CD4-positive, alpha-beta memory T cell (primary cell): ENCODE measurements at regions of chr2 and their contacts with region 1.

Region 1: DNA sequence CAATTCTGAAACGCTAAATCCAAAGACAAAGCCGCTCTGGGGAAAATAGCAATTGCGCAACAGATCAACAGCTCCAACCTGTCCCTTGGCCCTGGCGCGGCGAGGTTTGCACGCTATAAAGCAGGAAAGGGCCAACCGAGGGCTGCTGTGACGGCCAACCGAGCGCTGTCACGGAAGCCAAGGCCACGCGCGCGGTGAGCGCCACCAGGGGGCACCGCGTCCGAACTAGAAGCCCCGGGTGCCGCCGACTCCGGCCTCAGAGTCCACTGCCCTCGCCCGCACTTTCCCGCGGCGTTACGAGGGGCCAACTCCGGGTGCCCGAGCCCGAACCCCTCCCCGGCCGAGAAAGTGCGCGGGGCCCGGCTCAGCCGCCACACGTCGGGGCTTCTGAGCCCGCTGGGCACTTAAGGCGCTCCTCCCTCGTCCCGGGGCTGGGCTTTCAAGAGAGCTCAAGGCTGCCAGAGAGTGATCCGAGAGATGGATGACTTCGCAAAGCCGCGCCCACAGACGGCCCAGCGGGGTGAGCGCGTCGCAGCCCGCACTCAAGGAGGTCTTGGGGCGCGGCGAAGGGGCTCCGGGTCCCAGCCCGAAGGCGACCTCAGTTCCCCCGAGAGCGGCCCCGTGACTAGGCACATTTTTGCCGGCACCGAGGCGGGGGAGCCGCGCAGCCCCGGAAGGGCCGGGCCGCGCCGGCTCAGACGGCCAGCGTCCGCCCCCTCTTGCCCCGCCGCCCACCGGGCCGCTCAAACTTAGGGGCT is 897 bp downstream of the NFE2L2 start:
- DNase-seq: peak; percentile 93 to 97 (median 94)
- H3K4me3 ChIP-seq: peak overlapping the region; percentile 57 to 100
- H3K4me3 Mint-ChIP-seq: peak overlapping the region; percentile 93 to 98 (median 96)
- H3K27ac ChIP-seq: peak overlapping the region; percentile 100
- H3K27ac Mint-ChIP-seq: peak overlapping the region; percentile 94 to 100 (median 99)
- H3K4me1 ChIP-seq: peaks cover 59% of the 10 kb centered on the region
- H3K4me1 Mint-ChIP-seq: peaks cover 36 to 75% (median 53%) of the 10 kb centered on the region in 4 donors
- H3K27me3 ChIP-seq: no peaks in the 10 kb centered on the region
- H3K27me3 Mint-ChIP-seq: no peaks in the 10 kb centered on the region

Region 2: DNA sequence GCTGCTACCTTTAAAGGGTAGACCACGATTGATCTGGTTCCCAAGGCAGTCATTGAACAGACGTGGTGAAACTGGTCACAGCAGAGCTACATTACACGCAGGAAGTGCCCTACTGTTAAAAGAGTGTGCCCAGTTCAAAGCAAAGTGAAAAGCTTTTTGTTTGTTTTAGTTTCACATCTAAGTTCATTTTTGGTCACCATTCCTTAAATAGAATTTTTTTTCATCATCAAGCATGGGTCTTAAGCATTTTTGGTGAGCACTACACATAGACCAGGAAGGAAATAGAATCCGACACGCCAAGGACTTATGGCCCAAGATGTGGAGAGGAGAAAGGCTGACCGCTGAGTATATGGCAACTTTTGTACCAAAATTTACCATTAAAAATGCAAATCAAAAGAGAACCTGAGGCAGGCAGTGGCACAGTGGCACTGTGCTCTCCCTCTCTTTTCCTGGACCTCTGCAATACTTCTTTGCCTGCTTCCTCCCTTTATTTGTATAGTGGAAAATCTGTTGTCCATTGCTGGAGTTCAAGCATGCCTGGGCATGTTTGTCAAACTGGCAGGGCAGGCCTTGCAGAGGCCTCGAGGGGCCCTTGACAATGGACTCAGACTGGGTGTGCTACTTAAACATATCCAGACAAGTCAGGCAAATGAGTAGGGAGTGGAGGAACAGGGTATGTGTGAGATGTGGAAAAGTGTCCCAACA is 93.7 kb before region 1 on chr2:
- CTCF ChIA-PET with region 1: interaction called, 161 read pairs
- POLR2A ChIA-PET with region 1: interaction called, 159 read pairs
- intact Hi-C with region 1: no loop called
- DNase-seq: no peak
- H3K4me3 ChIP-seq: no peak overlapping the region
- H3K4me3 Mint-ChIP-seq: no peak overlapping the region
- H3K27ac ChIP-seq: no peak overlapping the region
- H3K27ac Mint-ChIP-seq: peak overlapping the region in 1 of 7 donors; percentile 52
- H3K4me1 ChIP-seq: peaks cover 18% of the 10 kb centered on the region
- H3K4me1 Mint-ChIP-seq: peaks cover 4 to 16% (median 11%) of the 10 kb centered on the region in 4 donors
- H3K27me3 ChIP-seq: no peaks in the 10 kb centered on the region
- H3K27me3 Mint-ChIP-seq: peaks cover 1 to 2% of the 10 kb centered on the region in 2 donors

Region 3: DNA sequence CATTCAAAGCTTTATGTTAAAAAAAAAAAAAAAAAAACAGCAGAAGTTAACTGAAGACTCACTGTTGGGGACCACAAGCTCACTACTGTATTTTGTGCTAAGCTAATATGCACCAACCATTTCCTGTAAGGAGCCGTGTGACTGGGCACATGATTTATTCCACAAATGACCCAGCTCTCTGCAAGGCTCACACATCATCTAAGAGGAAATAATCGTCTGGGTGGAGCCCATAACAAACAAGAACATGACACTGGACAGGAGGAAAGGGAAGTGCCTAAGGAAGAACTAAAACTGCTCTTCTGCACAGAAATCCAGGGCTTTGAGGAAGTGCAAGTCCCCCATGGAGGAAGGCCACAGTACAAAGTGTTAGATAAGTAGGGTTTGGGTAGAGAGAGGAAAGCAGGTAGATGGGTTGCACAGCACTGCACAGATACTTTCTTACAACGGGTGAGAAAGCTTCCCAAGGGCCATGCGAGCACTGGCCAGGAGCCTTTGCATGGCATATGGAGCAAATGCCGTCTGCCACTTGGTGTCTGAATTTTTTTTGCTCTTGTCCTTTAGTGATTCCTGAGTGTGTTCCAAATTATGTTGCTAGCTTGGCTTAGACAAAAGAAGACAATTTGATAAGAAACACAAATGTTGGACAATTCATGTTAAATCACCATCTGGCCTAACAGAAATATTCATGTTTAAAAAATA is 23.5 kb before region 1 on chr2:
- CTCF ChIA-PET with region 1: interaction called, 46 read pairs
- POLR2A ChIA-PET with region 1: interaction called, 108 read pairs
- intact Hi-C with region 1: loop called (anchors 1 kb)
- DNase-seq: peak; percentile 43 to 62 (median 49)
- H3K4me3 ChIP-seq: no peak overlapping the region
- H3K4me3 Mint-ChIP-seq: peak overlapping the region in 7 of 8 donors; percentile 13 to 78 (median 64)
- H3K27ac ChIP-seq: peak overlapping the region; percentile 22
- H3K27ac Mint-ChIP-seq: peak overlapping the region; percentile 44 to 96 (median 89)
- H3K4me1 ChIP-seq: peaks cover 85% of the 10 kb centered on the region
- H3K4me1 Mint-ChIP-seq: peaks cover 56 to 89% (median 72%) of the 10 kb centered on the region in 4 donors
- H3K27me3 ChIP-seq: no peaks in the 10 kb centered on the region
- H3K27me3 Mint-ChIP-seq: no peaks in the 10 kb centered on the region

Region 4: DNA sequence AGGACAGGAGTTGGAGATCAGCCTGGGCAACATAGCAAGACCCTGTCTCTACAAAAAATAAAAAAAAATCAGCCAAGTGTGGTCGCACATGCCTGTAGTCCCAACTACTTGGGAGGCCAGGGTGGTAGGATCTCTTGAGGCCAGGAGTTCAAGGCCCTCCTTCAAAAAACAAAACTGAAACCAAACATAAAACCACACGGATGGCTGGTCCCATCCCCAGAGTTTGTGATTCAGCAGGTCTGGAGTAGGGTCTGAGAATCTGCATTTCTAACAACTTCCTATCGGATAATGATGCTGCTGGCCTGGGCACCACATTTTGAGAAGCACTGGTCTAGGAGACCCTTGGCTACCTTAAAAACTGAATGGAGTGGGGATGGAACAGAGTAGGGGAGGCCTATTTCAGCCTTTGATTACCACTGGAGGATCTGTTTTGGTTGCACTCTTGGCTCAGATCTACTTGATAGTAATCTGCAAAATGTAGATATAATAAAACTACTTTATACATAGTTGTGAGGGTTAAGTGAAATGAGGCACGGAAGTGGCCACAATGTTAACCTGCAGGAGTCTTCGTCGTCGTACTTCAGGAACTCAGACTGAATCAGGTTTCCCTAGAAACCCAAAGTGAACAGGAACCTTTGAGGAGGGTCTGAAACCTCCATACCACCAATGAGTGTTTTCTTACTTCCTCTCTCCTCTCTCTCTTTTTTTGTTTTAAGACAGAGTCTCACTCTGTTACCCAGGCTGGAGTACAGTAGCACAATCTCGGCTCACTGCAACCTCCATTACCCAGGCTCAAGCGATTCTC is 26.4 kb after region 1 on chr2:
- CTCF ChIA-PET with region 1: interaction called, 143 read pairs
- POLR2A ChIA-PET with region 1: interaction called, 144 read pairs
- intact Hi-C with region 1: no loop called
- DNase-seq: peak in 4 of 5 donors; percentile 8 to 35 (median 20)
- H3K4me3 ChIP-seq: no peak overlapping the region
- H3K4me3 Mint-ChIP-seq: peak overlapping the region; percentile 22 to 90 (median 78)
- H3K27ac ChIP-seq: peak overlapping the region; percentile 16
- H3K27ac Mint-ChIP-seq: peak overlapping the region; percentile 66 to 96 (median 94)
- H3K4me1 ChIP-seq: peaks cover 20% of the 10 kb centered on the region
- H3K4me1 Mint-ChIP-seq: peaks cover 7 to 24% (median 13%) of the 10 kb centered on the region in 4 donors
- H3K27me3 ChIP-seq: no peaks in the 10 kb centered on the region
- H3K27me3 Mint-ChIP-seq: no peaks in the 10 kb centered on the region

Region 5: GRCh38 chr2:177325270-177325929 is 61.8 kb after region 1 on chr2:
- CTCF ChIA-PET with region 1: interaction called, 17 read pairs
- POLR2A ChIA-PET with region 1: interaction called, 23 read pairs
- intact Hi-C with region 1: no loop called
- DNase-seq: no peak
- H3K4me3 ChIP-seq: no peak overlapping the region
- H3K4me3 Mint-ChIP-seq: no peak overlapping the region
- H3K27ac ChIP-seq: no peak overlapping the region
- H3K27ac Mint-ChIP-seq: no peak overlapping the region
- H3K4me1 ChIP-seq: peaks cover 13% of the 10 kb centered on the region
- H3K4me1 Mint-ChIP-seq: peaks cover 0 to 5% (median 2%) of the 10 kb centered on the region in 4 donors
- H3K27me3 ChIP-seq: no peaks in the 10 kb centered on the region
- H3K27me3 Mint-ChIP-seq: no peaks in the 10 kb centered on the region

Region 6: GRCh38 chr2:177552422-177553175 is 289.0 kb after region 1 on chr2:
- CTCF ChIA-PET with region 1: interaction called, 4 read pairs
- POLR2A ChIA-PET with region 1: interaction called, 7 read pairs
- intact Hi-C with region 1: loop called (anchors 1 kb)
- DNase-seq: peak; percentile 94 to 96 (median 96)
- H3K4me3 ChIP-seq: peak overlapping the region; percentile 57 to 90
- H3K4me3 Mint-ChIP-seq: peak overlapping the region; percentile 95 to 99 (median 98)
- H3K27ac ChIP-seq: peak overlapping the region; percentile 97
- H3K27ac Mint-ChIP-seq: peak overlapping the region; percentile 98 to 100 (median 100)
- H3K4me1 ChIP-seq: peaks cover 9% of the 10 kb centered on the region
- H3K4me1 Mint-ChIP-seq: peaks cover 6 to 20% (median 8%) of the 10 kb centered on the region in 4 donors
- H3K27me3 ChIP-seq: no peaks in the 10 kb centered on the region
- H3K27me3 Mint-ChIP-seq: peaks cover 3 to 4% of the 10 kb centered on the region in 2 donors

Region 7: DNA sequence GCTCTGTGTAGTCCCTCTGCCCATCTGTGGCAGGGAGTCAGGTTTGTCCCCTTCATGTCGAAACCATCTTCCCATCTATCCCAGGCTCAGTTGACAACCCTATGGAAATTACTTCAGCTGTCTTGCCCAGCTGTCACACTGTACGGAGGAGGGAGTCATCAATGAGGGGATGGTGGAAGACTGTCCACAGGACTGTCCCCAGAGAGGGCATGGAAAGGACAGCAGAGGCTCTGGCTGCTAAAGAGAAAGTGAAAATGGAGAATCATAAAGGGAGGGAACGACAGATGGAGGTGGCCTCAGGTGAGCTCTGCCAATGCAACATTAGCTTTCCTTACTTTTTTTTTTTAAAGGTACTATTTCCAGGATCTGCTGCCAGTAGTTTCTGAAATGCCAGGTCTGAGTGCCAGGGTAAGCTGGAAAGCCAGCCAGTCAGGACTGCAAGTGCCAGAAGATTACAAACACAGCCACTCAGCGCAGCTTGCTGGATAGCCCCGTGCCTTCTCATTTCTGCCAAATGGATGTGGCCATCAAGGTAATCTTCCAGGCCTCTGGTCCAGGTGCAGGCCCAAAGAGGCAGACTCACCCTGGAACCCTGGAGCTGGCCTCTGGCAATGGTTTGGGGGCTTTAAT is 321.7 kb after region 1 on chr2:
- CTCF ChIA-PET with region 1: no interaction called
- POLR2A ChIA-PET with region 1: no interaction called
- intact Hi-C with region 1: no loop called
- DNase-seq: no peak
- H3K4me3 ChIP-seq: no peak overlapping the region
- H3K4me3 Mint-ChIP-seq: peak overlapping the region in 1 of 8 donors; percentile 48
- H3K27ac ChIP-seq: no peak overlapping the region
- H3K27ac Mint-ChIP-seq: no peak overlapping the region
- H3K4me1 ChIP-seq: no peaks in the 10 kb centered on the region
- H3K4me1 Mint-ChIP-seq: no peaks in the 10 kb centered on the region
- H3K27me3 ChIP-seq: no peaks in the 10 kb centered on the region
- H3K27me3 Mint-ChIP-seq: peaks cover 0 to 5% of the 10 kb centered on the region in 2 donors